Natural killer cell (primary cell): ENCODE measurements at regions of chr16 and their contacts with region 1.

Region 1: DNA sequence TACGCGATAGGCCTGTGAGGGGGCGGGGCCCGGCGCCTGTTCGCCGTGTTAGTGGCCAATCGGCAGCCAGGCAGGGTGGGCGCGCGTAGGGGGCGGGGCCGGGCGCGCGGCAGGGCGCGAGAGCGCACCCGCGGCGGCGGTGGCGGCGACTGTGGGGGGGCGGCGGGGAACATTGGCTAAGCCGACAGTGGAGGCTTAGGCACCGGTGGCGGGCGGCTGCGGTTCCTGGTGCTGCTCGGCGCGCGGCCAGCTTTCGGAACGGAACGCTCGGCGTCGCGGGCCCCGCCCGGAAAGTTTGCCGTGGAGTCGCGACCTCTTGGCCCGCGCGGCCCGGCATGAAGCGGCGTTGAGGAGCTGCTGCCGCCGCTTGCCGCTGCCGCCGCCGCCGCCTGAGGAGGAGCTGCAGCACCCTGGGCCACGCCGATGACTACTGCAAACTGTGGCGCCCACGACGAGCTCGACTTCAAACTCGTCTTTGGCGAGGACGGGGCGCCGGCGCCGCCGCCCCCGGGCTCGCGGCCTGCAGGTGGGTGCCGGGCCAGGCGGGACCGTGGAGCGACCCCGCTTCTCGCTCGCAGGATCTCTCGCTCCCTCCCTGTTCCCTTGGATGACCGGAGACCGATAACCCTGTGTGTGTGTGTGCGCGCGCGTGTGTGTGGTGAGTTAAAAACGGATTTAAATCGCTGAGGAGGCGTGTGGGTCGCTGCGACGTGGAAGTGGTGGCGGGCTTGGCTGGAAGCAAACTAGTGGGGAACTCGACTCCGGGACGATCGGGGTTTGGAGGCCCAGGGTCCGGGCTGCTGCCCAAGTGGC is at the start of gene NFATC3:
- DNase-seq: peak; percentile 97 to 98
- ATAC-seq: peak; percentile 75 to 93 (median 83)
- H3K4me3 ChIP-seq: peak within 1 kb of the TSS; percentile 94
- H3K4me3 Mint-ChIP-seq: peak within 1 kb of the TSS; percentile 88
- H3K27ac ChIP-seq: peak within 1 kb of the TSS; percentile 95
- H3K27ac Mint-ChIP-seq: peak within 1 kb of the TSS; percentile 81 to 90
- H3K4me1 ChIP-seq: peaks cover 51% of the 10 kb centered on the region
- H3K4me1 Mint-ChIP-seq: peaks cover 67 to 72% of the 10 kb centered on the region in 2 donors
- H3K27me3 ChIP-seq: no peaks in the 10 kb centered on the region
- H3K27me3 Mint-ChIP-seq: no peaks in the 10 kb centered on the region
- CTCF ChIP-seq: no peak
- total RNA-seq, gene NFATC3: 241 to 282 (median 263) TPM

Region 2: GRCh38 chr16:68074850-68075555 is 10.5 kb before region 1 on chr16:
- intact Hi-C with region 1: loop called (anchors 1 kb)
- DNase-seq: peak; percentile 78 to 83
- ATAC-seq: peak; percentile 60 to 84 (median 82)
- H3K4me3 ChIP-seq: no peak overlapping the region
- H3K4me3 Mint-ChIP-seq: peak overlapping the region; percentile 93
- H3K27ac ChIP-seq: peak overlapping the region; percentile 73
- H3K27ac Mint-ChIP-seq: peak overlapping the region; percentile 94 to 96
- H3K4me1 ChIP-seq: peaks cover 100% of the 10 kb centered on the region
- H3K4me1 Mint-ChIP-seq: peaks cover 79 to 87% of the 10 kb centered on the region in 2 donors
- H3K27me3 ChIP-seq: no peaks in the 10 kb centered on the region
- H3K27me3 Mint-ChIP-seq: no peaks in the 10 kb centered on the region
- CTCF ChIP-seq: no peak

Region 3: GRCh38 chr16:68417711-68418301 is 332.3 kb after region 1 on chr16:
- intact Hi-C with region 1: no loop called
- DNase-seq: peak; percentile 28 to 90
- ATAC-seq: peak; percentile 74 to 83 (median 80)
- H3K4me3 ChIP-seq: no peak overlapping the region
- H3K4me3 Mint-ChIP-seq: peak overlapping the region; percentile 78
- H3K27ac ChIP-seq: peak overlapping the region; percentile 75
- H3K27ac Mint-ChIP-seq: peak overlapping the region; percentile 87
- H3K4me1 ChIP-seq: peaks cover 33% of the 10 kb centered on the region
- H3K4me1 Mint-ChIP-seq: peaks cover 28% of the 10 kb centered on the region in 2 donors
- H3K27me3 ChIP-seq: no peaks in the 10 kb centered on the region
- H3K27me3 Mint-ChIP-seq: no peaks in the 10 kb centered on the region
- CTCF ChIP-seq: no peak

Region 4: DNA sequence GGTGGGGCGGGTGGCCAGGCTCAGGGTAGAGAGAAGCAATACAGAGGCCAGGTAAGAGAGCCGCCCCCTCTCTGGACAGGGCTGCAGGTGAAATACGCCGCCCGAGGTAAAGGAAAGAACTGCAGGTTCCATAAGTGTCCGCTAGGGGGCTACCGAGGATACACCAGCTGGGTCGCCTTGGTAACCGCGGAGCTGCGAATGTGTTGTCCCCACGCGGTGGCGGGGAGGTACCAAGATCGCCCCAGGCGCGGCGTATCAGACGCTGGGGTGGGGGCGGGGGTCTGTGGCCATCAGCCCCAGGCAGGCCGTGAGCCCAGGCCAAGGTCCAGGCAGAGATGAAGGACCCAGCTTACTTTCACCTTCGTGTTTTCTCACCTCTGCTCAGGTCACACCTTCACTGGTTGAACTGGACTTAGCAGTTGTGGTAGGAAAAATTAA is 435.2 kb after region 1 on chr16:
- intact Hi-C with region 1: no loop called
- DNase-seq: peak; percentile 79 to 95
- ATAC-seq: peak; percentile 98 to 99 (median 98)
- H3K4me3 ChIP-seq: no peak overlapping the region
- H3K4me3 Mint-ChIP-seq: peak overlapping the region; percentile 75
- H3K27ac ChIP-seq: no peak overlapping the region
- H3K27ac Mint-ChIP-seq: peak overlapping the region; percentile 56 to 87
- H3K4me1 ChIP-seq: peaks cover 11% of the 10 kb centered on the region
- H3K4me1 Mint-ChIP-seq: peaks cover 8 to 10% of the 10 kb centered on the region in 2 donors
- H3K27me3 ChIP-seq: no peaks in the 10 kb centered on the region
- H3K27me3 Mint-ChIP-seq: no peaks in the 10 kb centered on the region
- CTCF ChIP-seq: peak; percentile 99